Cardiac septum (tissue), 1 donor: ENCODE measurements at regions of chr11 and their contacts with region 1.

Region 1: GRCh38 chr11:8338138-8338537 is 74.5 kb upstream of the LMO1 start:
- DNase-seq: no peak

Region 2: GRCh38 chr11:8258784-8259183 is 79.4 kb before region 1 on chr11:
- intact Hi-C with region 1: no loop called
- DNase-seq: peak; percentile 65

Region 3: GRCh38 chr11:8566613-8567210 is 228.6 kb after region 1 on chr11:
- intact Hi-C with region 1: loop called (anchors 5 kb)
- DNase-seq: no peak